HCT116 (cell line): ENCODE measurements at regions of chr19 and their contacts with region 1.

Region 1: DNA sequence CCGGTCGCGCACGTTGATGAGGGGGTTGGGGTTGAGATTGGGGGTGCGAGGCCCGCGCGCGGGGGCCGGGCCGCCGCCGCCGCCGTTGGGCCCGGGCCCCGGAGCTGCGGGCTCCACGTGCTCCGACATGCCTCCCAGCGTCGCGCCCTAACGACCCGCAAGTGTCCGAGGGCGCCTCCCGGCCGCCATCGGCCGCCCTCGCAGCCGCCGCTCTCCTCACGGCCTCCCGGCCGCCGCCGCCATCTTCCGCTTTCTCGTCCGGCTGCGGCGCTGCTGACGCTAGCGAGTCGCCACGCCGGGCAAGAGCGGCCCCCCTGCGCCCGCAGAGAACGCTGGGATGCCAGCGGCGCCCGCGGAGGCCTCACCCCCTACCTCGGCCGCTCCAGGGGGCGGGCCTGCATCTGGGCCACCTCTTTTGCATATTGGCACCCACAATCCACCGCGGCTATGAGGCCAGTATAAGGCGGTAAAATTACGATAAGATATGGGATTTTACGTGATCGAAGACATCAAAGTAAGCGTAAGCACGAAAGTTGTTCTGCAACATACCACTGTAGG is at the start of gene TMEM259:
- DNase-seq: peak; percentile 93
- ATAC-seq: peak; percentile 82
- H3K4me3 ChIP-seq: peak within 1 kb of the TSS; percentile 94 to 97
- H3K27ac ChIP-seq: peak within 1 kb of the TSS; percentile 86
- H3K4me1 ChIP-seq: peaks cover 50 to 62% of the 10 kb centered on the region in 2 experiments
- H3K27me3 ChIP-seq: no peaks in the 10 kb centered on the region
- CTCF ChIP-seq: no peak
- POLR2A ChIP-seq: no peak
- RAD21 ChIP-seq: no peak
- total RNA-seq, gene TMEM259: 202 TPM

Region 2: DNA sequence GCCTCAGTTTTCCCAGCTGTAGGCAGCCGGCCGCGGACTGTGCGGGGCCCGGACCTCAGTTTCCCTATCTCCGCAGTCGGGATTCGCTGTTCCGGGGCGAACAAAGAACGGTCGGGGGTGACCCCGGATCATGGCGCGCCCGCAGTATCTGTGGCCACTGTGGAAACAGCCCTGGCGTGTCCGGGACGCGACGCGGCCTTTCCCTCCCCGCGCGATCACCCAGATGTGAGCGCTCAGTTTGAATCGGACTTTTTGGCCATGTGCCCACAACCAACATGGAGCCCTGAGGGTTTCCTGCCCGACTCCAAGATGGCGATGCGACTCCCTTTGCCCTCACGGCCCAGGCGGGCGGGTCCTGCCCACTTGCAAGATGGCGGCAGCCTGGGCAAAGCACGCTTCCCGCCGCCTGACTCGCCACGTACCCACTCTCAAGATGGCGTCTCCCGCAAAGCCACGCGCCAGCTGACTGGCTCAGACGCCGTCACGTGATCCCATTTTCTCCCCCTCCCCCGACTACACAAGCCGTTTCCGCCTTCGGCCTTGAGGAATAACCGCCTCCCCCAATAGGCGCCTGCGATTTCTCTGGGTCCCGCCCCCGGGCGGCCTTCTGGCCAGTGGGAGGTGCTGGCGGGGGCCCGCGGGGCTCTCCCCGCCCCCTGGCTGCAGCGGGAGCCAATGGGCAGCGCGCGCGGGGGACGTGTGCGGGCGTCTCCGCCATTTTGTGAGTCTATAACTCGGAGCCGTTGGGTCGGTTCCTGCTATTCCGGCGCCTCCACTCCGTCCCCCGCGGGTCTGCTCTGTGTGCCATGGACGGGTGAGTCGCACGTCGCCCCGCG is 224.0 kb before region 1 on chr19 and contains the start of gene PTBP1:
- CTCF ChIA-PET with region 1: no interaction called
- POLR2A ChIA-PET with region 1: no interaction called
- RAD21 ChIA-PET with region 1: no interaction called
- intact Hi-C with region 1: loop called (anchors 1 kb)
- DNase-seq: peak; percentile 100
- ATAC-seq: peak; percentile 86
- H3K4me3 ChIP-seq: peak within 1 kb of the TSS; percentile 83 to 88
- H3K27ac ChIP-seq: peak within 1 kb of the TSS; percentile 96
- H3K4me1 ChIP-seq: peaks cover 17 to 36% of the 10 kb centered on the region in 2 experiments
- H3K27me3 ChIP-seq: no peaks in the 10 kb centered on the region
- CTCF ChIP-seq: peak in 1 of 3 experiments; percentile 16; a peak in 1 of 6 replicates
- POLR2A ChIP-seq: peak; percentile 61
- RAD21 ChIP-seq: no peak
- total RNA-seq, gene PTBP1: 676 TPM

Region 3: DNA sequence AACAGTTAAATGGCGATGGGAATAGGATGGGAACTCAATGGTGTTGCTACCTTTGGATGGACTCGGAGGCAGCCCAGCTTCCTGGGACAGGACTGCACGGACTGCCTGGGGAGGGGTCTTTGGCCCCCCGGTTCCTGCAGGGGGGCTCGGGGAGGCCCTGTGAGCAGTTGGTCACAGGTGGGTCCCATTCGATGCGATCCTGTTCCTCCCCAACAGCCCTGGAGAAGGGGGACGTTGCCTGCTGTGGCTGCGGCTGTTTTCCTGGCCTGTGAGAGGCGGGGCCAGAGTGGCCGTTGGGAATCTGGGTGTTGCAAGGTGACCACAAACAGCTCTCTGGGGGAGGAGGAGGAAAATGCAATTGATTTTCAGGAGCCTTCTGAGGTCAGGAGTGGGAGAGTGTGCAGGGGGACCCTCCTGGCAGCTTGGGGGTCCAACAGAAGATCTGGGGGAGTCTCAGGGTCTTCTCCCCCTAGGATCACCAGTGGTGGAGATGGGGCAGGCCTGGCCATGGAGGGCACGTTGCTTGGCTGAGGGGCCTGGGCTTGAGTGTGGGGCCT is 197.3 kb before region 1 on chr19:
- CTCF ChIA-PET with region 1: no interaction called
- POLR2A ChIA-PET with region 1: no interaction called
- RAD21 ChIA-PET with region 1: no interaction called
- intact Hi-C with region 1: no loop called
- DNase-seq: no peak
- ATAC-seq: peak; percentile 35; the same call in 1 of the 2 replicates
- H3K4me3 ChIP-seq: no peak overlapping the region
- H3K27ac ChIP-seq: peak overlapping the region; percentile 13; the same call in 1 of the 2 replicates
- H3K4me1 ChIP-seq: peaks cover 7 to 9% of the 10 kb centered on the region in 2 experiments; a peak in 3 of 4 replicates
- H3K27me3 ChIP-seq: no peaks in the 10 kb centered on the region
- CTCF ChIP-seq: no peak
- POLR2A ChIP-seq: no peak
- RAD21 ChIP-seq: no peak

Region 4: GRCh38 chr19:1039646-1040475 is 18.9 kb after region 1 on chr19 and contains the start of gene ABCA7:
- CTCF ChIA-PET with region 1: interaction called, 9 read pairs
- POLR2A ChIA-PET with region 1: interaction called, 85 read pairs
- RAD21 ChIA-PET with region 1: interaction called in 1 of 2 experiments, 4 read pairs
- intact Hi-C with region 1: loop called (anchors 2 kb)
- DNase-seq: peak; percentile 96
- ATAC-seq: peak; percentile 78
- H3K4me3 ChIP-seq: peak within 1 kb of the TSS; percentile 91
- H3K27ac ChIP-seq: peak within 1 kb of the TSS; percentile 78
- H3K4me1 ChIP-seq: peaks cover 31 to 67% of the 10 kb centered on the region in 2 experiments
- H3K27me3 ChIP-seq: no peaks in the 10 kb centered on the region
- CTCF ChIP-seq: no peak
- POLR2A ChIP-seq: no peak
- RAD21 ChIP-seq: no peak
- total RNA-seq, gene ABCA7: 91.4 TPM

Region 5: DNA sequence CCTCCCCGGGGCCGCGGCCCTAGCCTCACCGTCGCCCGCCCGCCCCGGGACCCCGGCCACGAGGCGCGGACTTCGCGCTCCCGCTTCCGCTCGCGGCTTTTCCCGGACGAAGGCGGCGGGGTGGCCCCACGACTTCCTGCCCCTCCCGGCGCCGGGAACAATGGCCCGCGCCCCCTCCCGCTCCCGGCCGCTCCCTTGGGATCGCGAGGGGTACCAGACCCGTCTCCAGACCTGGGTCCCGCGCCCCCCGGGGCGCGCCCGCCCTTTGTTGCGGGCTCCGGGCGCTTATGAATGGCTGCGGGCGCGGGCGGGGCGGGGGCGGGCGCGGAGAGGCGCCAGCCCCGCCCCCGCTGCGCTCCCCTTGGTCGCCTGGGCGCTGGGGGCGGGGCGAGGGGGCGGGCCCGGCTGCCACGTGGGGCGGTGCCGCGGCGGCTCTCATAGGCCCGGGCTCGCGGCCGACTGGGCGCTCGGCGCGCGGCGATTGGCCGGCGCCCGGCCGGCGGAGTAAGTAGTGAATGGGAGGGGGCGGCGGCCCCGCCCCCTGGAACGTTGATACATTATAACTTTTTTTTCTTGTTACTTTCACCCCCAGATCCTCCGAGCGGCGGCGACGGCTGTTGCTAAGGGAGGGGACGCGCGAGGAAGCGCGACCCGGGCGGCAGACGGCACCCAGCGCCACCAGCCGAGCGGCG is 228.5 kb after region 1 on chr19:
- CTCF ChIA-PET with region 1: interaction called, 4 read pairs
- POLR2A ChIA-PET with region 1: no interaction called
- RAD21 ChIA-PET with region 1: no interaction called
- intact Hi-C with region 1: loop called (anchors 10 kb)
- DNase-seq: peak; percentile 89
- ATAC-seq: peak; percentile 45
- H3K4me3 ChIP-seq: peak overlapping the region; percentile 68 to 74
- H3K27ac ChIP-seq: peak overlapping the region; percentile 100
- H3K4me1 ChIP-seq: peaks cover 45 to 74% of the 10 kb centered on the region in 2 experiments
- H3K27me3 ChIP-seq: no peaks in the 10 kb centered on the region
- CTCF ChIP-seq: no peak
- POLR2A ChIP-seq: peak; percentile 43
- RAD21 ChIP-seq: no peak